A673 (cell line): ENCODE measurements at regions of chr21 and their contacts with region 1.

Region 1: GRCh38 chr21:21712748-21713520 is 714.7 kb downstream of the NCAM2 start:
- DNase-seq: peak; percentile 62
- H3K4me3 ChIP-seq: no peak overlapping the region
- H3K27ac ChIP-seq: peak overlapping the region; percentile 61
- H3K4me1 ChIP-seq: peaks cover 30% of the 10 kb centered on the region
- H3K27me3 ChIP-seq: no peaks in the 10 kb centered on the region
- CTCF ChIP-seq: no peak

Region 2: GRCh38 chr21:21632926-21633325 is 80.0 kb before region 1 on chr21:
- CTCF ChIA-PET with region 1: no interaction called
- POLR2A ChIA-PET with region 1: no interaction called
- intact Hi-C with region 1: no loop called
- DNase-seq: no peak
- H3K4me3 ChIP-seq: no peak overlapping the region
- H3K27ac ChIP-seq: no peak overlapping the region
- H3K4me1 ChIP-seq: no peaks in the 10 kb centered on the region
- H3K27me3 ChIP-seq: no peaks in the 10 kb centered on the region
- CTCF ChIP-seq: no peak

Region 3: GRCh38 chr21:22409571-22409970 is 696.6 kb after region 1 on chr21:
- CTCF ChIA-PET with region 1: no interaction called
- POLR2A ChIA-PET with region 1: no interaction called
- intact Hi-C with region 1: loop called (anchors 5 kb)
- DNase-seq: peak; percentile 95
- H3K4me3 ChIP-seq: no peak overlapping the region
- H3K27ac ChIP-seq: peak overlapping the region; percentile 97
- H3K4me1 ChIP-seq: peaks cover 33% of the 10 kb centered on the region
- H3K27me3 ChIP-seq: no peaks in the 10 kb centered on the region
- CTCF ChIP-seq: no peak